ENCODE measurements at regions of chr12 and their contacts with region 1.

Region 1: GRCh38 chr12:71746983-71747611 is 7.6 kb upstream of the RAB21 start:
- DNase-seq: peak; percentile 76
- H3K4me3 Mint-ChIP-seq: no peak overlapping the region
- H3K27ac Mint-ChIP-seq: no peak overlapping the region
- H3K4me1 Mint-ChIP-seq: no peaks in the 10 kb centered on the region
- H3K27me3 Mint-ChIP-seq: peaks cover 30% of the 10 kb centered on the region
- CTCF ChIP-seq: peak; percentile 78

Region 2: GRCh38 chr12:71415336-71416231 is 331.5 kb before region 1 on chr12:
- CTCF ChIA-PET with region 1: interaction called, 5 read pairs
- POLR2A ChIA-PET with region 1: no interaction called
- intact Hi-C with region 1: loop called (anchors 1 kb)
- DNase-seq: peak; percentile 72
- H3K4me3 Mint-ChIP-seq: no peak overlapping the region
- H3K27ac Mint-ChIP-seq: no peak overlapping the region
- H3K4me1 Mint-ChIP-seq: no peaks in the 10 kb centered on the region
- H3K27me3 Mint-ChIP-seq: no peaks in the 10 kb centered on the region
- CTCF ChIP-seq: peak; percentile 73

Region 3: DNA sequence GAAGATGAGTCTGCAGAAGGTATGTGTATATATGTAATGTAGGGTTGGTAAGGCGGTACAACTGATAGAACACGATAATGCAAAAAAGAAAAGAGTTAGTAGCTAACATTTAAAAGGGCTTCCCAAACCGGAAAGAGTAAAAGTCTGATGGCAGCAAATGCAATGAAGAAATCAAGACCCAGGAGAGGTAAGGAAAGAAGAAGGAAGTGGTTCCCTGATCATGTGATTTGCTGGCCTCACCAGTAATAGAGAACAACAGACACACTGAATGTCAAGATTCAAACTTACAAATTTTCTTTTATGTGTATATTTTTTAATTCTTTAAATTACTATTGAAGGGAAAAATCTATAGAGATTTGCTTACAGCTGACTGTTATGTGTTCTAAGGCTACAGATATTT is 101.8 kb before region 1 on chr12:
- CTCF ChIA-PET with region 1: interaction called, 15 read pairs
- POLR2A ChIA-PET with region 1: interaction called, 3 read pairs
- intact Hi-C with region 1: no loop called
- DNase-seq: no peak
- H3K4me3 Mint-ChIP-seq: no peak overlapping the region
- H3K27ac Mint-ChIP-seq: no peak overlapping the region
- H3K4me1 Mint-ChIP-seq: no peaks in the 10 kb centered on the region
- H3K27me3 Mint-ChIP-seq: no peaks in the 10 kb centered on the region
- CTCF ChIP-seq: no peak

Region 4: DNA sequence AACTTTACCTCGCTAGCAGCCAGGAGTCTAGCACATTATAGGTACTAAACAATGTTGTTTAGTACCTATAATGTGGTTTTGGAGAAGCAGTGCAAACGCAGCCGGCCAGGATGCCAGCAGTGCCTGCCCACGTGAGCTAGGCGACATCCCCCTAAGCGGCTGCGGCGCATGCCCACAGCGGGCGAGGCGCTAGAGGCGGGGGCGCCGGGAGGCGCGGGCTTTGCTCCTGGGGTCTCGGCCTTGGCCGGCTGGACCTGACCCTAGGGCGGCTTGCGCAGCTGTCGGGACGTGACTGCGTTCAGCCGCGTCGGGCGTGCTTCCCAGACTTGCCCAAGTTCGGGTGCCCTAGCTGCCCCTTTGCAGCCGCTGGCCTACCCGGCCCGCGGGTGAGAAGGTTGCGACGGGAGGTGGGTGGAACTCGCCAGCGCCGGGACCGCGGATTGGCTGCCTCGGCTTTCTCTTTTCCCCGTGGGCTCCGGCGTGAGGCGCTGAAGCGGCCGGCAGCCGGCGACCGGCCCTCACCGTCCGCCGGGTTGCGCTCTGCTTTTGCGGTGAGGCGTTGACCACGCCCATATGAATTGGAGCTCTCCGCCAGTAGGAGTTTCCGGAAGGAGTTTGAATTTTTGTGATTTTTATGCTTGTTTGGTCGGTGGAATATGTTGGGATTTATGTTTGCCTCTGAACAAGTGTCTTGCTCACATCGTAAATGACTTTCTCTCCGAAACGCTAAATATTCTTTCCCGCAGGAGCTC is 61.0 kb before region 1 on chr12 and contains the start of gene TMEM19:
- CTCF ChIA-PET with region 1: interaction called, 226 read pairs
- POLR2A ChIA-PET with region 1: interaction called, 141 read pairs
- intact Hi-C with region 1: loop called (anchors 1 kb)
- DNase-seq: peak; percentile 89
- H3K4me3 Mint-ChIP-seq: peak within 1 kb of the TSS; percentile 87
- H3K27ac Mint-ChIP-seq: peak within 1 kb of the TSS; percentile 76
- H3K4me1 Mint-ChIP-seq: peaks cover 16% of the 10 kb centered on the region
- H3K27me3 Mint-ChIP-seq: no peaks in the 10 kb centered on the region
- CTCF ChIP-seq: peak; percentile 11
- total RNA-seq, gene TMEM19: 7.2 and 7.3 TPM in 2 replicates

Region 5: GRCh38 chr12:71725011-71725410 is 22.1 kb before region 1 on chr12:
- CTCF ChIA-PET with region 1: interaction called, 19 read pairs
- POLR2A ChIA-PET with region 1: interaction called, 13 read pairs
- intact Hi-C with region 1: no loop called
- DNase-seq: no peak
- H3K4me3 Mint-ChIP-seq: no peak overlapping the region
- H3K27ac Mint-ChIP-seq: no peak overlapping the region
- H3K4me1 Mint-ChIP-seq: peaks cover 13% of the 10 kb centered on the region
- H3K27me3 Mint-ChIP-seq: no peaks in the 10 kb centered on the region
- CTCF ChIP-seq: no peak

Region 6: GRCh38 chr12:71999795-72000194 is 252.7 kb after region 1 on chr12:
- CTCF ChIA-PET with region 1: no interaction called
- POLR2A ChIA-PET with region 1: no interaction called
- intact Hi-C with region 1: no loop called
- DNase-seq: peak; percentile 12
- H3K4me3 Mint-ChIP-seq: no peak overlapping the region
- H3K27ac Mint-ChIP-seq: no peak overlapping the region
- H3K4me1 Mint-ChIP-seq: peaks cover 5% of the 10 kb centered on the region
- H3K27me3 Mint-ChIP-seq: peaks cover 33% of the 10 kb centered on the region
- CTCF ChIP-seq: no peak

Measured in MCF 10A (cell line).